Motor neuron (in vitro differentiated cells): ENCODE measurements at regions of chr12 and their contacts with region 1.

Region 1: GRCh38 chr12:46153268-46153872 is 115.5 kb downstream of the SLC38A1 start:
- ATAC-seq: no peak
- H3K4me3 ChIP-seq: no peak overlapping the region
- H3K27ac ChIP-seq: no peak overlapping the region
- H3K4me1 ChIP-seq: peaks cover 0 to 3% of the 10 kb centered on the region in 2 donors

Region 2: DNA sequence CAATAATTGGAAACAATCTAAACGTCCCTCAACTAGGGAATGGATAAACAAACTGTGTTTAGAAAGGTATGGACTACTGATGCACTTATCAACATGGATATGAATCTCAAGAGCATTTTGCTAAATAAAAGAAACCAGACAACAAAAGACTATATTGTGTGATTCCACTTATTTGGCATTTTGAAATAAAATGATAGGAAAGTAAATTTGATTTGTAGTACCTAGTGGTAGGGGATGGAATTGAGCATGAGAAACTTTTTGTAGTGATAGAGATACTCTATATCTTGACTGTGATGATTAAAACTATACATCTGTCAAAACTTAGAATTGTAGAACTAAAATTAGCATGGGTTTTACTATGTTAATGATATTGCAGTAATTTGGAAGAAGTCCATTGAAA is 336.7 kb before region 1 on chr12:
- in situ Hi-C with region 1: no loop called
- ATAC-seq: peak in 1 of 8 experiments; percentile 31
- H3K4me3 ChIP-seq: no peak overlapping the region
- H3K27ac ChIP-seq: no peak overlapping the region
- H3K4me1 ChIP-seq: no peaks in the 10 kb centered on the region

Region 3: DNA sequence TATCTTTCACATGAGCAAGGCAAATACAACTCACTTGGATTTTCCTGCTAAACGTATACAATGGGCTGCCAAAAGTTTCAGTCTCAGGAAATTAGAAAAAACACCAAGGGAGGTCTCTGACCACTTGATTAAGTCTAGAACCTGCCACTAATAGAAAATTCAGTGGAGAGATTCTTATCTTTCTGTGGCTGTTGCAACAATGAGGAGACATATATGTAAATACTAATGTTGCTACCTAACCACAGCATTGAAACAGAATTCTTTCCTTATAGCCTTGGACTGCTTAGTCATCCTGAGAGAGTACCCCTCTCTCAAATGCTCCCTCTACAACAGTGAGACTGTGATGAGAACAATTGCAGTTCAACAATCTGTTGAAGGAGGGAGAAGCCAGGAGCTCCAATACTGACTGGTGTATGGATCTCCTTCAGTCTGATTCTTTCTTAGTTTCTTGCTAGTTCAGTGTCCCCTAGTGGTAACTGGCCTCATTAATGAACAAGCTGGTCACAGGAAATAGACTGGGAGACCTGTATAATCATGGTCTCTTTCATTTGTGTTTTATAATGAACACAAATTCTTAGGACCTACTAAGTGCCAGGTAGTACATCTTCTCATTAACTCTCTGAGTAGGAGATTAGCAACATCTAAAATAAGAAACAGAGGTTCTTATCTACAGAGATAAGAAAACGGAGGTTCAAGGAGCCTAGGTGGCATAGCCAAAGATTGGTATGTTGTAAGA is 507.9 kb after region 1 on chr12:
- in situ Hi-C with region 1: loop called in 2 of 9 experiments (anchors 25 kb)
- ATAC-seq: peak; percentile 47 to 97 (median 92)
- H3K4me3 ChIP-seq: no peak overlapping the region
- H3K27ac ChIP-seq: no peak overlapping the region
- H3K4me1 ChIP-seq: peaks cover 0 to 8% of the 10 kb centered on the region in 2 donors